ENCODE measurements at regions of chr12 and their contacts with region 1.

Region 1: DNA sequence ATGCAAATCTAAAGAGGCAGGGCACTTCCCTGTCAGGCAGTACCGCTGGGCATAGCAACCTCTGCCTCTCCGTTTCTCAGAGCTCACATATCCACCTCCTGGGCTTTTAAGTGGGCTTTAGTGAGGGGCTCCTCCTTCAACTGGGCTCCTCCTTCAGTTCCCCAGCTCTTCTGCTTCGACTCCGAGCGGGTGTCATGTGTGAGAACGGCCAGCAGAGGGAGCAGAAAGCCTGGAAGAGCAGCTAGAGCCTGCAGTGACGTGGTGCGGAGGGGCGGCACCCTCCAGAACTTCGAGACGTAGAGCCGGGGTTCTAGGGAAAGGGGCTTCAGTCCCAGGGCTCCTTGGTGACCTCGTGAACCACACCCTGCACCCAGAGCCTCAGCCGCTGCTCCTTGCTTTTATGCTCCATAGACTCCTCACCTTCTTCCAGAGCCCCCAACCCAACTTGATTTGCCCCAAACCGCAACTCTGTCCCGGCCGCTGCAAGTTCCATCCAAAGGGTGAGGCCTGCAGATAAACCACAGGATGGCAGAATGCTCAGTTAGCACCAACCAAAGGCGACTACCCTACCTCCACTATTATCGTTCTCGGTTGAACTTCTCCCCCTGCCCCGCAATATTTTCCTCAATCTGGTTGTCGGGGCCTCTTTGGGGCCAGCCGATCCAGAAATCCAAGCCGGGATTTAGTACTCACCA is 383 bp upstream of the GLI1 start:
- DNase-seq: peak; percentile 93
- H3K4me3 ChIP-seq: peak overlapping the region; percentile 37 to 63 (median 55)
- H3K27ac ChIP-seq: peak overlapping the region; percentile 25
- H3K4me1 ChIP-seq: peaks cover 14% of the 10 kb centered on the region
- H3K27me3 ChIP-seq: peaks cover 5 to 10% of the 10 kb centered on the region in 2 experiments
- CTCF ChIP-seq: peak; percentile 96 to 97
- POLR2A ChIP-seq: peak; percentile 63

Region 2: DNA sequence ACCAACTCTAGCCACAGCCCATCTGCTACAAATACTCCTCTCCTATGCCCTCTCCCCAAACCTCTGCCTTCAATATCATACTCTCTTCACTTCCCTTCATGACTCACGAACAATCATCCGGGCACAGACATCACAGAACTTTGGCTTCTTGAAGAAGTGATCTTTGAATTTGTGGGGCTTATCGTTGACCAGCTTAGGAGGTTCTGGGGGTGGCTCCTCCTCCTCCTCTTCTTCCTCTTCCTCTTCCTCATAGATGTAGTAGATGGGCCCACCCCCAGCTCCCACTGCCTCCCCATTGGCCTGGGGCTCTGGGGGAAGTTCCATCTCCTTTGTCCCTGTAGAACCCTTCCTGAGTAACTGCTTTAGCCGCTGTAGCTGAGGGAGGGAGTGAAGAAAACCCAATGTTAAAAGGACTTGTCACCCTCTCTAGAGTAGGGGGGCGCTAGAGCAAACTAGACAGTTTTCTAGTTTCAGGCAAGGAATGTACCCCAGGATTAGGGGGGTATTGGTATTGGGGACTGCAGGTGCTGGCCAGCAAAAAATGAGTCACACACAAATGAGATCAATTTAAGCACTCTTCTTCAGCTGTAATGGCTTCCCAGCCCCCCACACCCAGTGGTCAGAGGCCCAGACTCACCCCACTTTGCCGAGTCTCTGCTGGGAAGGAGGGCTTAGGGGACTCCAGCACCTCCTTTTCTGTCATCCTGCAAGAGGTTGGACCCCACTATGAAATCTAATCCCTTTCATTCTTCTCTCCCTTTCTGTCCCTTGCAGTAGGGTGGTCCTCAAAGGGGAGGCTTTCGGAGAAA is 210.1 kb before region 1 on chr12:
- CTCF ChIA-PET with region 1: no interaction called
- POLR2A ChIA-PET with region 1: no interaction called
- dilution Hi-C with region 1: no loop called
- intact Hi-C with region 1: no loop called
- DNase-seq: no peak
- H3K4me3 ChIP-seq: no peak overlapping the region
- H3K27ac ChIP-seq: no peak overlapping the region
- H3K4me1 ChIP-seq: no peaks in the 10 kb centered on the region
- H3K27me3 ChIP-seq: peaks cover 0 to 3% of the 10 kb centered on the region in 2 experiments
- CTCF ChIP-seq: no peak
- POLR2A ChIP-seq: no peak

Region 3: GRCh38 chr12:57309420-57309819 is 149.8 kb before region 1 on chr12:
- CTCF ChIA-PET with region 1: interaction called, 394 read pairs
- POLR2A ChIA-PET with region 1: interaction called, 4 read pairs
- dilution Hi-C with region 1: no loop called
- intact Hi-C with region 1: no loop called
- DNase-seq: peak; percentile 48
- H3K4me3 ChIP-seq: no peak overlapping the region
- H3K27ac ChIP-seq: peak overlapping the region; percentile 28
- H3K4me1 ChIP-seq: peaks cover 14% of the 10 kb centered on the region
- H3K27me3 ChIP-seq: no peaks in the 10 kb centered on the region
- CTCF ChIP-seq: no peak
- POLR2A ChIP-seq: no peak

Region 4: GRCh38 chr12:57430931-57431720 is 28.1 kb before region 1 on chr12 and contains the start of gene R3HDM2:
- CTCF ChIA-PET with region 1: interaction called, 10 read pairs
- POLR2A ChIA-PET with region 1: no interaction called
- dilution Hi-C with region 1: no loop called
- intact Hi-C with region 1: no loop called
- DNase-seq: peak; percentile 95
- H3K4me3 ChIP-seq: peak within 1 kb of the TSS; percentile 46 to 75 (median 69)
- H3K27ac ChIP-seq: peak within 1 kb of the TSS; percentile 64
- H3K4me1 ChIP-seq: peaks cover 6% of the 10 kb centered on the region
- H3K27me3 ChIP-seq: no peaks in the 10 kb centered on the region
- CTCF ChIP-seq: no peak
- POLR2A ChIP-seq: peak; percentile 96
- total RNA-seq, gene R3HDM2: 31.3 and 36.6 TPM in 2 replicates

Region 5: DNA sequence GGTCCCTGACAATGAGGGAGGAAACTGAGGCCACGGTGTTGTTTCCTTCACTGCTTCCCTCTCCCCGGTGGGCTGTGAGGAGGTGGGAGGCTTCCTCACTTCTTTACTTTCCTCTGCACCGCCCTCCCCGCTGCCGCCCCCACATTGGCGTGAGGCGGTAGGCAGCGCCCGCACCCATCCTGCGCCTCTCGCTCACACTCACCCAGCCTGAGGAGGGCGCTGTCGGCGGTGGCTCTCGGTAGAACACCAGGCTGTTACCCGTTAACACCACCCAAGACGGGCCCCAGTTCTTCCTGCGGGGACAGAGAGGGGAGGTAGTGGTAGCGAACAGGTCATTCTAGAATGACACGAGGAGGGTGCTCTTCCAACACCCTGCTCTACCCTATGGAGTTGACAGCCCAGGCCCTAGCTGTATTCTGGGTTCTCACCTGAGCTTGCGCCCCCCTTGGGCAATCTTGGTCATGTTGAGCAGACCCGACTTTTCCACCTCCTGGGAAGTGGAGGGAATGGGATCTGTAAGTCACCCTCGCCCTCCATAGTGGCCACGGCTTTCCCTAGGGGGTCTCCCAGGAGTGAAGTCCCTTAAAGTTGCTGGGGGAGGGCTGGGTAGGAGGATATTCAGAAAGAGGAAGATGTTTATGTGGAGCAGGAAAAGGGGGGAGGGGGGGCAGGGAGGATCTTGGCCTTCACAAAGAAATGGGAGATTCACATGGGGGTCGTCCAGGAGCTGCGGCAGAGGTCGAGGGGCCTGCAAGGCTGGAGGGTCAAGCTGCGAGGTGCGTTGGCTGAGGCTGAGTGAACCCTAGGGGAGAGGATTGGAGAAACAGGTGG is 17.2 kb after region 1 on chr12:
- CTCF ChIA-PET with region 1: interaction called, 18 read pairs
- POLR2A ChIA-PET with region 1: no interaction called
- dilution Hi-C with region 1: no loop called
- intact Hi-C with region 1: no loop called
- DNase-seq: no peak
- H3K4me3 ChIP-seq: peak overlapping the region in 1 of 3 experiments; percentile 3
- H3K27ac ChIP-seq: no peak overlapping the region
- H3K4me1 ChIP-seq: peaks cover 12% of the 10 kb centered on the region
- H3K27me3 ChIP-seq: peaks cover 48 to 63% of the 10 kb centered on the region in 2 experiments
- CTCF ChIP-seq: peak; percentile 14 to 27
- POLR2A ChIP-seq: no peak

Region 6: GRCh38 chr12:57621497-57622292 is 162.5 kb after region 1 on chr12:
- CTCF ChIA-PET with region 1: interaction called, 7 read pairs
- POLR2A ChIA-PET with region 1: no interaction called
- dilution Hi-C with region 1: no loop called
- intact Hi-C with region 1: loop called (anchors 2 kb)
- DNase-seq: peak; percentile 52
- H3K4me3 ChIP-seq: peak overlapping the region in 1 of 3 experiments; percentile 14
- H3K27ac ChIP-seq: no peak overlapping the region
- H3K4me1 ChIP-seq: peaks cover 5% of the 10 kb centered on the region
- H3K27me3 ChIP-seq: peaks cover 59 to 62% of the 10 kb centered on the region in 2 experiments
- CTCF ChIP-seq: peak; percentile 94 to 98
- POLR2A ChIP-seq: no peak

Measured in endothelial cell of umbilical vein (primary cell).